ENCODE measurements at regions of chr20 and their contacts with region 1.

Region 1: GRCh38 chr20:59032023-59032712 is at the start of gene ATP5F1E:
- DNase-seq: peak; percentile 99
- ATAC-seq: peak; percentile 99
- H3K4me3 Mint-ChIP-seq: peak within 1 kb of the TSS; percentile 92
- H3K27ac Mint-ChIP-seq: peak within 1 kb of the TSS; percentile 92
- H3K4me1 Mint-ChIP-seq: peaks cover 47% of the 10 kb centered on the region
- H3K27me3 Mint-ChIP-seq: no peaks in the 10 kb centered on the region
- total RNA-seq, gene ATP5F1E: 81.1 to 87.3 TPM

Region 2: GRCh38 chr20:58888521-58889333 is 143.4 kb before region 1 on chr20:
- POLR2A ChIA-PET with region 1: interaction called, 19 read pairs
- DNase-seq: peak; percentile 83
- ATAC-seq: peak; percentile 49
- H3K4me3 Mint-ChIP-seq: peak overlapping the region; percentile 85
- H3K27ac Mint-ChIP-seq: peak overlapping the region; percentile 85
- H3K4me1 Mint-ChIP-seq: peaks cover 24% of the 10 kb centered on the region
- H3K27me3 Mint-ChIP-seq: no peaks in the 10 kb centered on the region

Region 3: DNA sequence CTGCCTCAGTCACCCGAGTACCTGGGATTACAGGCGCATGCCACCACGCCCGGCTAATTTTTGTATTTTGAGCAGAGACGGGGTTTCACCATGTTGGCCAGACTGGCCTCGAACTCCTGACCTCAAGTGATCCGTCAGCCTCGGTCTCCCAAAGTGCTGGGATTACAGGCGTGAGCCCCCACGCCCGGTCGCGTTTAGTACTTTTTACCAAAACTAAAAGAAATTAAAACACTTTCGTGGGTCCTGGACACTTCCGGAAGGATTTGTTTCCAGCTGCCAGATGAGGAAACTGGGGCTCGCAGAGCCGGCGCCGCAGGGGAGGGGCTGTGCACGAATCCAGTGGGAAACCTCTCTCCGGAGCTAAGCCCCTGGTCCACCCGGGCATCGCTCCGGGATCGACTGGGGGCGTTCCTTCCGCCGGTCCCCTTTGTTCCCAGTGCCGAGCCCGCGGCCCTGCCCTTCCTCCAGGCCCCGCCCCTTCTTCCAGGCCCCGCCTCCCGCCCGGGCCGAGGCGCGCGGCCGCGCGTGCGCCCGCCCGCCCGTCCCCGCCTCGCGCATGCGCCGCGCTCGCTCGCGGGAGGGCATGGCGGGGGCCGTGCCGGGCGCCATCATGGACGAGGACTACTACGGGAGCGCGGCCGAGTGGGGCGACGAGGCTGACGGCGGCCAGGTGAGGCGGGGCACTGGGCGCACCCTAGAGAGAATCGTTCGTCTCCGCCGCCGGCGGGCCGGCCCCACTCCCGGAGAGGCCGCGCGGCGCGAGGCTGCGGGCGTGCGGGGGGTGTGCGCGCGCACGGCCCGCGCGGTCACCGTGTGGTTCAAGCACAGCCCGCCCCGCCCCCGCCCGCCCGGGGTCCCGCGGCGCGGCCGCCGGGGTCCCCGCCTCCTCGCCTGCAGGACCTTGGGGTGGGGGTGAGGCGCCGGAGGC is 51.2 kb before region 1 on chr20 and contains the start of gene NELFCD:
- POLR2A ChIA-PET with region 1: interaction called, 27 read pairs
- DNase-seq: peak; percentile 97
- ATAC-seq: peak; percentile 91
- H3K4me3 Mint-ChIP-seq: peak within 1 kb of the TSS; percentile 91
- H3K27ac Mint-ChIP-seq: peak within 1 kb of the TSS; percentile 81
- H3K4me1 Mint-ChIP-seq: peaks cover 21% of the 10 kb centered on the region
- H3K27me3 Mint-ChIP-seq: no peaks in the 10 kb centered on the region
- total RNA-seq, gene NELFCD: 71.7 to 76.4 TPM

Region 4: DNA sequence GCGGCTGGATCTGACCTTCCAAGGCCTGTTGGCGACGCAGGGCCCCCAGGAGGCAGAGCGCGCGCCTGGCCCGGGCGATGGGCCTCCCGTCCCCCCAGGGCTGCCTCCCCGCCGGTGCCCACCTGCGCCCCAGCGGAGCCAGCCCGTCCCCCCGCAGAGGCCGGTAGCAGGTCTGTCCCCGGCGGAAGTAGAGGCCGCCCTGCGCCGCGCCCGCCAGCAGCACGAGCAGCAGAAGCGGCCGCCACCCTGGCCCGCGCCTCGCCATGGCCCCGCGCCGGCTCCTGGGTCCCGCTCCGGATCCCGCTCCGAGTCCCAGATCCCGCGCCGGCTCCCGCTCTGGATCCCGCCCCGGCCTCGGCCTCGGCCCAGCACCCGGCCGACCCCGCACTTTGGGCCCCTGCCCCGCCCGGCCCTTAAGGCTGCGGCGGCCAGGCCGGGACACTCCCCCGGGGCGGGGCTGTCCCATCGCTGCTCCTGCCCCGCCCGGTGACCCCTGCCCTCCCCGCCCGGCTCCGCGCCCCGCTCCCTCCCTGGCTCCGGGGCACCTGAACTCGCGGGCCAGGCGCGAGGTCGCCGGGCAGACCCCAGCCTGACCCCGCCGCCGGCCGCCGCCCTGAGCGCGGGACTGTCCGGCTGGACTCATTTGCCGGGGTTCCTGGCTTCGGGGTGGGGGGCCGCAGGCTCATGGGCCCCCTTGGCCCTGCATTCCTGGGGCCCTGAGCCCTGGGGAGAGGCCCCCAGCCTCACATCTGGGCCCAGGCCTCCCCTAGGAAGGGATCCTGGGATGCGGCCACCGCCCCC is 25.1 kb before region 1 on chr20 and contains the start of gene CTSZ:
- POLR2A ChIA-PET with region 1: interaction called, 14 read pairs
- DNase-seq: peak; percentile 73
- ATAC-seq: peak; percentile 57
- H3K4me3 Mint-ChIP-seq: peak within 1 kb of the TSS; percentile 89
- H3K27ac Mint-ChIP-seq: peak within 1 kb of the TSS; percentile 85
- H3K4me1 Mint-ChIP-seq: peaks cover 48% of the 10 kb centered on the region
- H3K27me3 Mint-ChIP-seq: no peaks in the 10 kb centered on the region
- total RNA-seq, gene CTSZ: 48.9 to 49.2 TPM

Region 5: GRCh38 chr20:59013959-59014608 is 18.1 kb before region 1 on chr20:
- POLR2A ChIA-PET with region 1: interaction called, 36 read pairs
- DNase-seq: peak; percentile 53
- ATAC-seq: peak; percentile 76
- H3K4me3 Mint-ChIP-seq: peak overlapping the region; percentile 1
- H3K27ac Mint-ChIP-seq: peak overlapping the region; percentile 35
- H3K4me1 Mint-ChIP-seq: peaks cover 58% of the 10 kb centered on the region
- H3K27me3 Mint-ChIP-seq: no peaks in the 10 kb centered on the region

Region 6: GRCh38 chr20:59042796-59043660 is 10.9 kb after region 1 on chr20:
- POLR2A ChIA-PET with region 1: interaction called, 59 read pairs
- DNase-seq: peak; percentile 98
- ATAC-seq: peak; percentile 99
- H3K4me3 Mint-ChIP-seq: peak overlapping the region; percentile 93
- H3K27ac Mint-ChIP-seq: peak overlapping the region; percentile 89
- H3K4me1 Mint-ChIP-seq: peaks cover 47% of the 10 kb centered on the region
- H3K27me3 Mint-ChIP-seq: no peaks in the 10 kb centered on the region

Region 7: GRCh38 chr20:59082077-59082740 is 50.0 kb after region 1 on chr20:
- POLR2A ChIA-PET with region 1: no interaction called
- DNase-seq: no peak
- ATAC-seq: no peak
- H3K4me3 Mint-ChIP-seq: no peak overlapping the region
- H3K27ac Mint-ChIP-seq: no peak overlapping the region
- H3K4me1 Mint-ChIP-seq: peaks cover 6% of the 10 kb centered on the region
- H3K27me3 Mint-ChIP-seq: peaks cover 12% of the 10 kb centered on the region

Region 8: GRCh38 chr20:59159493-59160376 is 127.6 kb after region 1 on chr20:
- POLR2A ChIA-PET with region 1: interaction called, 14 read pairs
- DNase-seq: peak; percentile 68
- ATAC-seq: peak; percentile 80
- H3K4me3 Mint-ChIP-seq: peak overlapping the region; percentile 85
- H3K27ac Mint-ChIP-seq: peak overlapping the region; percentile 95
- H3K4me1 Mint-ChIP-seq: peaks cover 41% of the 10 kb centered on the region
- H3K27me3 Mint-ChIP-seq: peaks cover under 1% of the 10 kb centered on the region